ENCODE measurements at regions of chr15 and their contacts with region 1.

Region 1: DNA sequence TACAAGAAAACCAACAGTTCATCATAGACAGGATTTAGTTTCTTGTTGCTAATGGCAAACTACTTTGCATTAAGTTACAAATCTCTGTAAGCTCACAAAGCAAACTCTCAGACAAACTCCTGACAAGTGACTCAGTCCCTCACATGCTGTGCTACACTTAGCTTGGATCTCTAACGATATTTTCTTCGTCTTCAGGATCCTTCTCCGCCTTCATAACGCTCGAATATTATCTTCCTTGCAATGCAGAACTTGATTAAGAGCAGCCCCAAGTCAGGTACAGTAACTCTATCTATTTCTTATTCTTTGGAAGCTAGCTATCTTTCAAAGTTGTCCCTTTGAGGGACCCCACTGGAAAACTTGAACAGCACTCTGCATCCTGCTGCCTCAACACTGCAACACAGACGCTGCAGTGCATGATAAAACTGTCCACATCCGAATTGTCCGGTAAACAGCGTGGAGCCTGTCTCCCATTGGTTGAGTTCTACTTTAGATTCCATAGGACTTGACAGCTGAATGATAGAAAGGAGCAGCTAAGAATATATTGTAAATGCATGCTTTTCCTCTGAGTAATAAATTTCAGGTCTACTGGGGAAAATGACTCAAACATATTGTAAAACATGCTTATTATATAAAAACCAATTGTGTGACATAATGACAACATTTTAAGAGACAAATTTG is 61.3 kb downstream of the UACA start:
- DNase-seq: peak; percentile 86
- H3K4me3 ChIP-seq: peak overlapping the region in 2 of 3 experiments; percentile 35 to 96
- H3K27ac ChIP-seq: peak overlapping the region; percentile 94
- H3K4me1 ChIP-seq: peaks cover 55% of the 10 kb centered on the region
- H3K27me3 ChIP-seq: no peaks in the 10 kb centered on the region
- CTCF ChIP-seq: no peak
- POLR2A ChIP-seq: peak; percentile 20

Region 2: DNA sequence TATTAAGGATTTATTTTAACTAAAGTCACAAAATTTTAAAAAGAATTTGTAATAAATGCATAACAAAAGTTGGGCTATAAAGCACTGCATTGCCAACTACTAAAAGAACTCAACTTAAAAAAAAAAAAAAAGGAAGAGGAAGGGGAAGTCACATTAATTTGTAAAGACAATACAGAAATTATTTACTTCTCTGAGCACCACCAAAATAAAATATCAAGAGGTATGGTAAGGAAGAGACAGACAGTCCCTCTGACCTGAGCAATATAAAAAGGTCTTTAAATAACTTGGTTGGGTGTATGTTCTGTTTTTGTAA is 22.2 kb before region 1 on chr15:
- CTCF ChIA-PET with region 1: interaction called, 15 read pairs
- POLR2A ChIA-PET with region 1: interaction called, 3 read pairs
- dilution Hi-C with region 1: no loop called
- intact Hi-C with region 1: no loop called
- DNase-seq: no peak
- H3K4me3 ChIP-seq: no peak overlapping the region
- H3K27ac ChIP-seq: no peak overlapping the region
- H3K4me1 ChIP-seq: peaks cover 12% of the 10 kb centered on the region
- H3K27me3 ChIP-seq: no peaks in the 10 kb centered on the region
- CTCF ChIP-seq: no peak
- POLR2A ChIP-seq: no peak

Region 3: DNA sequence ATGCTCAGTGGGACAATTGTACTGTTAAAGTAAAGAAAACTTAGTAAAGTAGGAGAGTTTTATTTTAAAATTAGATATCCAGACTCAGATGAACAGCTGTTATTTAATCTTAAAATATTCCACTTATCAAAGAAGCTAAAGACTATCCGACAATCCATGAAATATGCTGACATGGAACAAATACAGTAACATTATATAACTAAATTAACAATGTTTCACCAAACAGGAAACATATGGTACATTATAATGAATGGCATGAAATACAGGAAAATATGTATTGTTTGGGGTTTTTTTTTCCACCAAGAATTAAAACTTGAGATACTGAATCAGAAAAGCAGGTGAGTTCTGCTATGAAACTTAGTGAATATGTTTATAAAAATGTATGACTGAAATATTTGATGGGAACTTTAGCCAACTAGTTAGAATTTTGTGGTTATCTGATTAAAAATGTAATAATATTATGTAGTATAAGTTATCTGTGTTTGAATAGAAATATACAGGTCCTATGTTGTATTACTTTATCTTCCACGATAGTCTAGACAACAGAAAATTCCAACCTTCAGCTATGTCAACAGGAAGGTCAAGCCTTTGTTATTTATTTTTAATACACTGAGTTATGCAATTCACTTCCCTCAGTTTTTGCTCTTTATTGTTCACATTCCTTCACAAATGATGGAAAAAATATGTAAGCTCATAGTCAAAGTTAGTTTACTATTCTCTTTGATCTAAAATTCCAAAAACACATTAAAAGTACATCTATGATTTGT is 11.4 kb before region 1 on chr15:
- CTCF ChIA-PET with region 1: interaction called, 8 read pairs
- POLR2A ChIA-PET with region 1: interaction called, 7 read pairs
- dilution Hi-C with region 1: no loop called
- intact Hi-C with region 1: loop called (anchors 1 kb)
- DNase-seq: peak; percentile 82
- H3K4me3 ChIP-seq: peak overlapping the region in 1 of 3 experiments; percentile 38
- H3K27ac ChIP-seq: peak overlapping the region; percentile 67
- H3K4me1 ChIP-seq: peaks cover 45% of the 10 kb centered on the region
- H3K27me3 ChIP-seq: no peaks in the 10 kb centered on the region
- CTCF ChIP-seq: no peak
- POLR2A ChIP-seq: no peak

Region 4: DNA sequence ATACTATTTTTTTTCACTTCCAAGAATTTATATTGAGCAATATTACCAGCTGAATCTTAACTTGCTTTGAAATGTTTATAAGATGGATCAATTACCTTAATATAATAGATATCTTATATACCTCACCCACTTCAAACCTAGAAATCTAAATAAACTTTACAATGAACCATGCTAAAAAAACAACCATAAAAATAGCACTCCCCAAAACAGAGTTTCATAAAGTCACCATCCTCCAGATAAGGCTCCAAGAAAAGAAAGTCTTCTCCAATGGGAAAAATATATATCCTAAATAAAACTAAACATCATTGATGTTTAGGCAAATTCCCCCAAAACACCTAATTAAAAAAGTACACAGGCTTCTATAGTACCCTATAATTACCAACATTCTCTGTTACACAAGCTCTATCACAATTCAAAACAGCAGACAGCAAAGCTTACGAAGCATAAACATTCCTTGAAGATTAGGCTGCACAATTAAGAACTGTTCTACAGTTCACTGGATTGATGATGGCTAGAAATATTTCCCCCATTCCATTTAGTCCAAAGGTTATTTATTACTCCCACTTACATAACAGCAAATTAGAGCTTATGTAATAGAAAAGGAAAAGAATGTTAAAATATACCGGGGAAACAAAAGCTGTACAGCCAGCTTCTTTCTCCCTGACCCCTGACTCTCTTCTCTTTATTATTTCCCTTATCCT is 11.8 kb after region 1 on chr15:
- CTCF ChIA-PET with region 1: interaction called, 26 read pairs
- POLR2A ChIA-PET with region 1: interaction called, 10 read pairs
- dilution Hi-C with region 1: no loop called
- intact Hi-C with region 1: loop called (anchors 1 kb)
- DNase-seq: peak; percentile 56
- H3K4me3 ChIP-seq: peak overlapping the region in 1 of 3 experiments; percentile 36
- H3K27ac ChIP-seq: peak overlapping the region; percentile 74
- H3K4me1 ChIP-seq: peaks cover 55% of the 10 kb centered on the region
- H3K27me3 ChIP-seq: no peaks in the 10 kb centered on the region
- CTCF ChIP-seq: no peak
- POLR2A ChIP-seq: no peak

Region 5: GRCh38 chr15:70775160-70775559 is 73.1 kb after region 1 on chr15:
- CTCF ChIA-PET with region 1: no interaction called
- POLR2A ChIA-PET with region 1: no interaction called
- dilution Hi-C with region 1: no loop called
- intact Hi-C with region 1: no loop called
- DNase-seq: peak; percentile 44
- H3K4me3 ChIP-seq: no peak overlapping the region
- H3K27ac ChIP-seq: peak overlapping the region; percentile 40
- H3K4me1 ChIP-seq: peaks cover 52% of the 10 kb centered on the region
- H3K27me3 ChIP-seq: no peaks in the 10 kb centered on the region
- CTCF ChIP-seq: no peak
- POLR2A ChIP-seq: no peak

Region 6: DNA sequence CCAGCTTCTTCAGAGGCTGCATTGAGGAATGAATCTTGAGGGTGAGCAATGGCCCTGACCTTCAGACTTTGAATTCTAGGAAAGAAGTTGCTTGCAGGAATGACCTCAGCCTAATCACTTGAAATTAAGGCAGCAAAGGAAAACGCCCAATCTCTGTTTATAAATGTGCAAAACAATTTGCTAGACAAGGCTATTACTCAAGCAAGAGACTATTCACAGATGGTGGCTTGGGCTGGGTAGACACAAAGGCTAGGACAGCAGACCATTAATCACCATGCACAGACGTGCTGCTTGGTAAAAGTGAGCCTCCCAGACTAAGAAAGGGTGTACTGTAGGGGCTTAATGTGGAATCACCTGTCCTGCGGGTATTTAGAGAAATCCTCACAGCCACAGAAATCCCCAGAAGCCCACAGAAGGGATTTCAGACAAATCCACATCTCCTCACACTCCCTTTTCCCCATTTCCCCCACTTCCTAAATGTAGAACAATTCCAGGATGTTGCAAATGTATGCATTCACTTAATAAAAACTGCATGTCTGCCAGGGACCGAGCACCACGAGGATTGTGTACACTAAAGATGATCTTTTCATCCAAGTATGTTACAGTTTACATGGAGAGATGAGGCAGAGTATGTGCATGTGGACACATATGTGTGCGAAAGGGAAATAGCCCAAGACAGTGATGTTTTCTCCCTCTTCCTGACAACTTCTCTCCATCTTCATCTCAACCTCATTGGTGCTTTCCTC is 672.8 kb after region 1 on chr15:
- CTCF ChIA-PET with region 1: no interaction called
- POLR2A ChIA-PET with region 1: no interaction called
- dilution Hi-C with region 1: no loop called
- intact Hi-C with region 1: loop called (anchors 10 kb)
- DNase-seq: peak; percentile 79
- H3K4me3 ChIP-seq: no peak overlapping the region
- H3K27ac ChIP-seq: peak overlapping the region; percentile 84
- H3K4me1 ChIP-seq: peaks cover 30% of the 10 kb centered on the region
- H3K27me3 ChIP-seq: no peaks in the 10 kb centered on the region
- CTCF ChIP-seq: no peak
- POLR2A ChIP-seq: no peak